Panc1 (cell line): ENCODE measurements at regions of chr6 and their contacts with region 1.

Region 1: GRCh38 chr6:26020329-26021000 is 57.9 kb downstream of the TRIM38 start:
- DNase-seq: no peak
- ATAC-seq: peak; percentile 74
- H3K4me3 ChIP-seq: peak overlapping the region; percentile 80 to 81
- H3K27ac ChIP-seq: peak overlapping the region; percentile 100
- H3K4me1 ChIP-seq: peaks cover 20% of the 10 kb centered on the region
- H3K27me3 ChIP-seq: no peaks in the 10 kb centered on the region
- CTCF ChIP-seq: no peak

Region 2: DNA sequence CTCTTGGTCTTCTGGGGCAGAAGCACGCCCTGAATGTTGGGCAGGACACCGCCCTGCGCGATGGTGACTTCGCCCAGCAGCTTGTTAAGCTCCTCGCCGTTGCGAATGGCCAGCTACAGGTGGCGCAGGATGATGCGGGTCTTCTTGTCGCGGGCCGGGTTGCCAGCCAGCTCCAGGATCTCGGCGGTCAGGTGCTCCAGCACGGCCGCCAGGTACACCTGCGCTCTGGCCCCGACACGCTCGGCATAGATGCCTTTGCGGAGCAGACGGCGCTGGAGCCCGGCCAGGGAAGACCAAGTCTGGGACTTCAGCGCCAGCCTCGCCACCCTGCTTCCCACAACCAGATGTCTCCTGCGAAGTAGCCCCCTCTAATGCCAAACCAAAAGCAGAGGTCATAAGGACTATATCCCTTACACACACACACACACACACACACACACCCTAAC is 138.4 kb before region 1 on chr6:
- CTCF ChIA-PET with region 1: no interaction called
- POLR2A ChIA-PET with region 1: no interaction called
- in situ Hi-C with region 1: no loop called
- intact Hi-C with region 1: no loop called
- DNase-seq: no peak
- ATAC-seq: no peak
- H3K4me3 ChIP-seq: no peak overlapping the region
- H3K27ac ChIP-seq: no peak overlapping the region
- H3K4me1 ChIP-seq: no peaks in the 10 kb centered on the region
- H3K27me3 ChIP-seq: no peaks in the 10 kb centered on the region
- CTCF ChIP-seq: no peak

Region 3: DNA sequence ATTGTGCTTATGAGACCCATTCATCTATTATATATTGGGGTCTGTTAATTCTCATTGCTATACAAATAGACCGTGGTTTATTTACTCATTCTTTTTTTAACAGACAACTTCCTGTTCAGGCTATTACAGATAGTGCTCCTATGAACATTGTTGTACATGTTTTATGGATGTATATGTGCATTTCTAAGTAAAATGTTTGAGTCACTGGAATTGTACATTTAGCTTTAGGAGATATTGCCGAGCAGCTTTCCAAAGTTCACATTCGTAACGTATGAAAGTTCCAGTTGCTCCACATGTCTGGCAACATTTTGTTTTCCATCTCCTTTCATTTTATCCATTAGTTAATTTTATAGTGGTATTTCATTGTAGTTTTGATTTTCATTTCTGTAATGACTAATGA is 109.1 kb before region 1 on chr6:
- CTCF ChIA-PET with region 1: no interaction called
- POLR2A ChIA-PET with region 1: interaction called, 14 read pairs
- in situ Hi-C with region 1: no loop called
- intact Hi-C with region 1: no loop called
- DNase-seq: no peak
- ATAC-seq: no peak
- H3K4me3 ChIP-seq: no peak overlapping the region
- H3K27ac ChIP-seq: no peak overlapping the region
- H3K4me1 ChIP-seq: no peaks in the 10 kb centered on the region
- H3K27me3 ChIP-seq: peaks cover 2% of the 10 kb centered on the region
- CTCF ChIP-seq: no peak